HEK293 (cell line): ENCODE measurements at regions of chr9 and their contacts with region 1.

Region 1: GRCh38 chr9:122125158-122125508 is 32.0 kb upstream of the TTLL11 start:
- H3K4me3 ChIP-seq: no peak overlapping the region
- H3K27ac ChIP-seq: no peak overlapping the region
- H3K4me1 ChIP-seq: no peaks in the 10 kb centered on the region
- CTCF ChIP-seq: peak; percentile 75

Region 2: GRCh38 chr9:122092611-122093506 is 32.3 kb before region 1 on chr9 and contains the start of gene TTLL11:
- CTCF ChIA-PET with region 1: interaction called, 371 read pairs
- POLR2A ChIA-PET with region 1: no interaction called
- H3K4me3 ChIP-seq: peak within 1 kb of the TSS; percentile 67
- H3K27ac ChIP-seq: no peak within 1 kb of the TSS
- H3K4me1 ChIP-seq: no peaks in the 10 kb centered on the region
- CTCF ChIP-seq: no peak

Region 3: DNA sequence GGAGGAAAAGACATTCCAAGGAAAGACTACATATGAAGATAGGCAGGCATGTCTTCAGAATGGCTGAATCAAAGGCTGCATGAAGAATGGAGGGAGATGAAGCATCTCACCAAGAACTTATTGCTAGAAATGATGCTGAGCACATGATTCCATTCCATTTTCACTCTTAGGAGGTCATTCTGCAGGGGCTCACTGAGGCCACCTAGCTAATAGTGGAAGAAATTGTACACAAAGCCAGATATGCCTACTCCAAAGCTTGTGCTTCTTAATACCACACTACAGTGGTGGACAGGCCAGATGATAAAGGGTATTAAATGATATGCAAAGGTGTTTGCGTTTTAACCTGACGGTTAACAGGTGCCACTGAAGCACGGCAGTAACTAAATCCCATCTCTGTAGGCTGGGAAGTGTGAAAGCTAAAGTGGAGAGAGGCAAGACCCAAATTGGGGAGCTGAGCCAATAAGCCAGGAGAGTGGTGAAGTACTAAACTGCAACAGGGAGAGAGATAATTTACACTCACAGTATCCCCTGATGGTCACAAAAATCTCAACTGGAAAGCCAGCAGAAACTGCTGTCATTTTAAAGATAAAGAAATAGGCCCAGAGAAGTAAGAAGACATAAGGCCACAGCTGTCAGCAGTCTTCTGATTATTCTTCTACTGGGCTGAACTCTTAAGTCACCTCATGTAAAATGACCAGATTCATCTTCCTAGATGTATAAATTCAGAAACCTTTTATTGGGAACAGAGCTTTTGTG is 19.9 kb after region 1 on chr9:
- CTCF ChIA-PET with region 1: interaction called, 30 read pairs
- POLR2A ChIA-PET with region 1: no interaction called
- H3K4me3 ChIP-seq: no peak overlapping the region
- H3K27ac ChIP-seq: no peak overlapping the region
- H3K4me1 ChIP-seq: no peaks in the 10 kb centered on the region
- CTCF ChIP-seq: no peak

Region 4: GRCh38 chr9:122338994-122339393 is 213.9 kb after region 1 on chr9:
- CTCF ChIA-PET with region 1: interaction called, 473 read pairs
- POLR2A ChIA-PET with region 1: interaction called, 7 read pairs
- H3K4me3 ChIP-seq: no peak overlapping the region
- H3K27ac ChIP-seq: no peak overlapping the region
- H3K4me1 ChIP-seq: no peaks in the 10 kb centered on the region
- CTCF ChIP-seq: no peak

Region 5: GRCh38 chr9:122810306-122810946 is 685.3 kb after region 1 on chr9:
- CTCF ChIA-PET with region 1: interaction called, 26 read pairs
- POLR2A ChIA-PET with region 1: no interaction called
- H3K4me3 ChIP-seq: no peak overlapping the region
- H3K27ac ChIP-seq: no peak overlapping the region
- H3K4me1 ChIP-seq: no peaks in the 10 kb centered on the region
- CTCF ChIP-seq: peak; percentile 62; the same call in 1 of the 2 replicates